Mucosa of descending colon (tissue), 3 donors: ENCODE measurements at regions of chr14 and their contacts with region 1.

Region 1: DNA sequence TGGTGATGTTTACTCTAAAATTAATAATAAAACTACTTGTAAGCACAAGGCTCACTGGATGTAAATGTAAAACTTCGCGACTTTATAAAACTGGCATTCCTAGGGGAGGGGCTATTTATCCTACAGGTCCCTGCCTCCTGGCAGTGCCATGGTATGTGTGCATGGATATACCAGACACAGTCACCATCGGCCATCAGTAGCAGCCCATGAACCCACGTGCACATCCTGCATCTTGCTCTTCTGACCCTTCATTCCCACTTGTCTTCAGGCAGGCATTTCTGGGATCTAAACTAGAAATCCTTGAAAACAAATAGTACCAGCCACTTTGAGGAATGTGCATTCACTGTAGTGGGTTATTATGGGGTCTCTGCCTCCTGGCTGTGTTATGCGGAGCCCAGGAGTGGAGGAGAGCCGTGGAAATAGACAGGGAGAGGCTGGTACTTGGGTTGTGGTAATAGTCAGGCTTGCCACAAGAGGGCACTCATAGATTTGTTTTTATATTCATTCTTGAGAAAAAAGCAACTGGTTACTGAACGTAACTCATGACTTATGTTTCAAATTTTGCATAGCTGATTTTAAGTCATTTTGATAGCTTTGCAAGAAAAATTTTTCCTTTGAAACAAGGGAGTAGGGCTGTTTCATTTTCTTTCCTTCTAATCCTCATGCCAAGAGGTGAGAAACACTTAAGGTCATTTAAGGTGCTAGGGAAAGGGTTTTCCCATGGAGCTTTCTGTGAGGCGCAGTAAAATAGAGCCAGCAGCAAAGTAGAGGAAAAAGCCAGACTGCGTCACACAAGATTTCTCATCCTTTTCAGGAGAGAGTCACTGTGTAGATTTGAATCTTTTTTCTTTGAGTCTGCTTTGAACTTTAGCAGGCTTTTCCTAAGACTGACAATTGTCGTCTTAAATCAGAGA is 17.4 kb upstream of the GALNT16 start:
- DNase-seq: peak in 1 of 3 donors; percentile 83
- ATAC-seq: peak; percentile 86
- H3K4me3 ChIP-seq: no peak overlapping the region
- H3K4me1 ChIP-seq: peaks cover 8% of the 10 kb centered on the region
- CTCF ChIP-seq: peak; percentile 49

Region 2: DNA sequence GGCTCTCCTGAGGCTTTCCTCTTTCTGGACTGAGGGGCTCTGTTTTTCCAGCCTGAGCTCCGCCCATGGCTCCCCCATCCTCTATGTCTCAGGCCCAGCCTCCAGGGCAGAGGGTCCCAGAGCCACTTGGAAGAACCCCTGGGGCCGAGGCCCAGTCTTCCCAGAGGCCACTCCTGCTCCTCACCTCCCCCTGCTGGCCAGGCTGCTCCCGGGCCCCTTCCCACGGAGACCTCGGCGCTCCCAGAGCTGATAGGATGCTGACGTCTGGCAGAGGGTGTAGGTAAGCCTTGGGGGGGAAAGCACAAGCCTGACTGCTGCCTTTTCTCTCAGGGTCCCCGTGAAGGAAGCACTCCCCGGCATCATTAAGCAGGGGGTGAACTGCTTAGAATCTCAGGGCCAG is 104.1 kb after region 1 on chr14:
- intact Hi-C with region 1: loop called in 1 of 2 experiments (anchors 10 kb)
- DNase-seq: peak in 2 of 3 donors; percentile 54 to 65
- ATAC-seq: peak; percentile 53
- H3K4me3 ChIP-seq: no peak overlapping the region
- H3K4me1 ChIP-seq: no peaks in the 10 kb centered on the region
- CTCF ChIP-seq: peak; percentile 36

Region 3: DNA sequence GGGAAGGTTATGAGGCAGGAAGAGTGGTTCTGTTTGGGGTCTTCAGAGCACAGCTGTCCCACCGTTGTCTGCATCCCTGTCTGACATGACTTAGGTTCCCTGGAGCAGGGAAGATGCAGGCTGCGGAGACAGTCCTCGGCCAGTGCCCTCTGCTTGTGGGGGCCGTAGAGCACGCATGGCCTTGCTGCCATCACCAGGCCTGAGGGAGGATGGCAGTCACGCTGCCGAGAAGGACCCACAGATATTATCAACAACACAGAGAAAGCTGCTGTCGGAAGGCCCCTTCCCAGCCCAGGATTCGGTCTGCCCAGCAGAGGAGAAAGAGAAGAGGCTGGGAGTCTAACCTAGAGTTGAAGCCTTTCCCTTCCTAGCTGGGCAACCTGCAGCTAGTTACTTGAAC is 120.5 kb after region 1 on chr14:
- intact Hi-C with region 1: loop called in 1 of 2 experiments (anchors 10 kb)
- DNase-seq: no peak
- ATAC-seq: peak; percentile 17
- H3K4me3 ChIP-seq: no peak overlapping the region
- H3K4me1 ChIP-seq: no peaks in the 10 kb centered on the region
- CTCF ChIP-seq: no peak

Region 4: GRCh38 chr14:69460093-69460701 is 217.6 kb after region 1 on chr14:
- intact Hi-C with region 1: loop called (anchors 10 kb)
- DNase-seq: peak in 2 of 3 donors; percentile 55 to 68
- ATAC-seq: peak; percentile 99
- H3K4me3 ChIP-seq: no peak overlapping the region
- H3K4me1 ChIP-seq: no peaks in the 10 kb centered on the region
- CTCF ChIP-seq: peak; percentile 42